Common myeloid progenitor, CD34-positive (primary cell): ENCODE measurements at regions of chr1 and their contacts with region 1.

Region 1: GRCh38 chr1:2391041-2391930 is at the starts of genes MORN1 and RER1:
- DNase-seq: peak; percentile 99 to 100 (median 100)
- H3K4me3 ChIP-seq: peak within 1 kb of the TSS; percentile 75 to 94 (median 86)
- H3K27ac ChIP-seq: peak within 1 kb of the TSS; percentile 77 to 91
- H3K4me1 ChIP-seq: peaks cover 2 to 26% (median 23%) of the 10 kb centered on the region in 4 experiments
- H3K27me3 ChIP-seq: no peaks in the 10 kb centered on the region

Region 2: GRCh38 chr1:2194898-2195673 is 196.2 kb before region 1 on chr1:
- CTCF ChIA-PET with region 1: interaction called, 9 read pairs
- POLR2A ChIA-PET with region 1: interaction called, 11 read pairs
- DNase-seq: peak; percentile 78 to 88 (median 88)
- H3K4me3 ChIP-seq: peak overlapping the region; percentile 28 to 83 (median 67)
- H3K27ac ChIP-seq: peak overlapping the region; percentile 58 to 86
- H3K4me1 ChIP-seq: peaks cover 0 to 37% (median 35%) of the 10 kb centered on the region in 4 experiments
- H3K27me3 ChIP-seq: no peaks in the 10 kb centered on the region

Region 3: DNA sequence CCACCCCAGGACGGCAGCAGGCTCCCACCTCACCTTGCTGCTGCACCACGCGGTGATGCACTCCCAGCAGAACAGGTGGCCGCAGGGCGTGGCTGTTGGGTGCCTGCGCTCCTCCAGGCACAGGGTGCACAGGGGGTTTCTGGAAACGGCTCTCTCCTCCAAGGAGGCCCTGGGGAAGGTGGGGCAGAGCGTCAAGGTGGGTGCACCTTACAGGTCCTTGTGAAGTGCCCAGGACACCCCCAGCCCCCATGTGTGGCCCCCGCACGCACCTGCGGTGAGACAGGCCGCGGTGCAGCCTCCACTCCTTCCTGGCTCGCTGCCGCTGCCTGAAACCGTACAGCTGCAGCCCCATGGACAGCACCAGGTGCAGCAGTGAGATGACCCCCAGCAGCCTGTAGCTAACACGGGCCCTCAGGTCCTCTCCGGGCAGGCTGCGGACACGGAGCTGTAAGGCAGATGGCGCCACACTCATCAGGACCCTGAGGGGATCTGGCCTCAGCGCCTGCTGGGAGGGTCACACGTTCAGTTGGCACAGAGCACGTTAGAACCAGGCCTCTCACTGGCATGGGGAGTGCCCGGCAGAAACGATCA is 15.3 kb after region 1 on chr1:
- CTCF ChIA-PET with region 1: no interaction called
- POLR2A ChIA-PET with region 1: no interaction called
- DNase-seq: no peak
- H3K4me3 ChIP-seq: no peak overlapping the region
- H3K27ac ChIP-seq: no peak overlapping the region
- H3K4me1 ChIP-seq: peaks cover 0 to 3% (median 1%) of the 10 kb centered on the region in 4 experiments
- H3K27me3 ChIP-seq: no peaks in the 10 kb centered on the region